IMR-90 (cell line): ENCODE measurements at regions of chr9 and their contacts with region 1.

Region 1: DNA sequence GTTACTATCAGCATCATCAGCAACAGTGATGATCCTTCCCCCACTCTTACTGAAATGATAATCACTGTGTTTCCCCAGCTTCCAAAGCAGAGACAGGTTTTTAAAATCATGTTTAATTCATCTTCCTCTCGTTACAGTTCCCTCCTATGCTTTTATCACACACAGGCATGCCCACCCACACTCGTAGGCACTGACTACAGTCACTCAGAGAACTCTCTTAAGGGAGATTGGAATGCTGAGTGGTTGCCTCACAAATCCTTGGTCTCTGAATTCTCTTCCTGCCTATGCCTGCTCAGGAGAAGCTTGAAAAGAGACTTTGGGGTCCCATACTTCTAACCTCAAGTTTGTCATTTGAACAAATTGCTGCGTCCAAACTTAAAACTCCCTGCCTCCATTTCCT is 179.2 kb downstream of the FRMD3 start:
- DNase-seq: no peak
- ATAC-seq: no peak
- H3K4me3 ChIP-seq: no peak overlapping the region
- H3K27ac ChIP-seq: no peak overlapping the region
- H3K4me1 ChIP-seq: no peaks in the 10 kb centered on the region
- H3K27me3 ChIP-seq: no peaks in the 10 kb centered on the region
- CTCF ChIP-seq: no peak
- POLR2A ChIP-seq: no peak
- RAD21 ChIP-seq: no peak

Region 2: DNA sequence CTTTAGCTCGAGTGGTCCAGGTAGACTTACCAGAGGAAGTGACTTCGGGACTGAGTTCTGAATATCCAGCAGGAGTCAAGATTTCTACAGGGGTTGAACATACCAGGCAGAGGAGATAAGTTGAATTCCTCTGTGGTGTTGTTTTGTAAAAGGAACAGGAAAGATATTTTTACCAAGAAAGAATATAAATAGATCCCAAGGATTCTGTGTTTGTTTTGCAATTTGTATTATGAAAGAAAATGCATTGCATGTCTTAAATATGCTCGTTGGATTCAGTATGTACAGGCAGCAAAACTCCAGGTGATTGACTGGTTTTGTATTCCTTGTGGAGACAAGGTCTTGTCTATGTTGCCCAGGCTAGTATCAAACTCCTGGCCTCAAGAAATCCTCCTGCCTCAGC is 18.6 kb before region 1 on chr9:
- CTCF ChIA-PET with region 1: interaction called, 4 read pairs
- POLR2A ChIA-PET with region 1: interaction called, 14 read pairs
- dilution Hi-C with region 1: no loop called
- in situ Hi-C with region 1: no loop called
- intact Hi-C with region 1: no loop called
- DNase-seq: no peak
- ATAC-seq: no peak
- H3K4me3 ChIP-seq: no peak overlapping the region
- H3K27ac ChIP-seq: no peak overlapping the region
- H3K4me1 ChIP-seq: no peaks in the 10 kb centered on the region
- H3K27me3 ChIP-seq: no peaks in the 10 kb centered on the region
- CTCF ChIP-seq: no peak
- POLR2A ChIP-seq: no peak
- RAD21 ChIP-seq: no peak

Region 3: DNA sequence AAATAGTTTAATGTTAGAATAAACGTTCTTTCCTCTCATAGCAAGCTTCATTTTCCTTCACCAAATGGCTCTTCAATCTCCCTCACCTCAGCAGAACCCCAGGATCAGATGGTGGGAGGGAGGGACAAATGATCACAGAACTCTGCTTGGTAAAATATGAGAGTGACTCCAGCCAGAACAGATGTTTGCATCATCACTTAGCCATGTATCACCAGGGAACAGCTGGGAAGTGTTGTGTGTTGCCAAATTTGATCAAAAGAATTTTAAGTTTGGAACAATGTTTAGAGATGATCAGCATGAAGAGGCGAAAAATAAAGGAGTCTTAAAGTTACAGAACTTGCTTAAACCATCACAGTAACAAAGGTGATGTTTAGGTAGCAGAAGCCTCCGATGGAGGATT is 63.5 kb after region 1 on chr9:
- CTCF ChIA-PET with region 1: no interaction called
- POLR2A ChIA-PET with region 1: no interaction called
- dilution Hi-C with region 1: no loop called
- in situ Hi-C with region 1: no loop called
- intact Hi-C with region 1: no loop called
- DNase-seq: no peak
- ATAC-seq: no peak
- H3K4me3 ChIP-seq: no peak overlapping the region
- H3K27ac ChIP-seq: no peak overlapping the region
- H3K4me1 ChIP-seq: no peaks in the 10 kb centered on the region
- H3K27me3 ChIP-seq: no peaks in the 10 kb centered on the region
- CTCF ChIP-seq: no peak
- POLR2A ChIP-seq: no peak
- RAD21 ChIP-seq: no peak